Adrenal gland (tissue), 19 donors: ENCODE measurements at regions of chr9 and their contacts with region 1.

Region 1: DNA sequence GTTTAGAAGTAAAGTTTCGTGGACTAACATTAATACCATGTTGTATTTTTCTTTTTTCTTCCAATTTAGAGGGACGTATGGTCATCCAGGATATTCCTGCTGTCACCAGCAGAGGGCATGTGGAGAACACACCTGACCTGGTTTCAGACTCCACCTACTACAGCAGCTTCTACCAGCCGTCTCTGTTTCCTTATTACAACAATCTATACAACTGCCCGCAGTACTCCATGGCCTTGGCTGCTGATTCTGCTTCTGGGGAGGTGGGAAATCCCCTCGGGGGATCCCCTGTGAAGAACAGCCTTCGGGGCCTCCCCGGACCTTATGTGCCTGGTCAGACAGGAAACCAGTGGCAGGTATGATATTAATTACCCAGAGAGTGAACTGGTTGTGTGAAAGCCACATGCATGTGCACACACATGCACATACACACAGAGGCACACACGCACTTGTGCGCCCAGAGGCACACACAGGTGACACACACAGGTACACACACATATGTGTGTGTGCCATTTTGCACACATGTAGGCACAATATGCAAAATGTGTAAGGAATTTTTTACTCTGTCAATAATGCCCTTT is 52.4 kb downstream of the DMRT1 start:
- DNase-seq: peak; percentile 41 to 83 (median 61)
- H3K4me3 ChIP-seq: peak overlapping the region in 1 of 4 donors; percentile 26
- H3K27ac ChIP-seq: no peak overlapping the region
- H3K4me1 ChIP-seq: no peaks in the 10 kb centered on the region
- H3K27me3 ChIP-seq: no peaks in the 10 kb centered on the region
- CTCF ChIP-seq: peak; percentile 67 to 90 (median 76)
- POLR2A ChIP-seq: no peak

Region 2: GRCh38 chr9:841371-842209 is 52.3 kb before region 1 on chr9 and contains the start of gene DMRT1:
- intact Hi-C with region 1: no loop called
- DNase-seq: no peak
- H3K4me3 ChIP-seq: no peak within 1 kb of the TSS
- H3K27ac ChIP-seq: no peak within 1 kb of the TSS
- H3K4me1 ChIP-seq: no peaks in the 10 kb centered on the region
- H3K27me3 ChIP-seq: peaks cover 51% of the 10 kb centered on the region
- CTCF ChIP-seq: no peak
- POLR2A ChIP-seq: no peak
- total RNA-seq, gene DMRT1: 9.2 TPM in 1 of 9 donors, not detected in the others

Region 3: GRCh38 chr9:1009101-1009707 is 115.3 kb after region 1 on chr9:
- intact Hi-C with region 1: loop called (anchors 2 to 5 kb)
- DNase-seq: peak; percentile 64 to 92 (median 83)
- H3K4me3 ChIP-seq: no peak overlapping the region
- H3K27ac ChIP-seq: no peak overlapping the region
- H3K4me1 ChIP-seq: no peaks in the 10 kb centered on the region
- H3K27me3 ChIP-seq: peaks cover 22% of the 10 kb centered on the region
- CTCF ChIP-seq: peak; percentile 91 to 98 (median 94)
- POLR2A ChIP-seq: no peak